Activated CD8-positive, alpha-beta T cell treated with anti-CD3 and anti-CD28 coated beads for 36 hours (primary cell): ENCODE measurements at regions of chr10 and their contacts with region 1.

Region 1: GRCh38 chr10:120221873-120222485 is 235.0 kb upstream of the PLPP4 start:
- DNase-seq: peak; percentile 24
- ATAC-seq: no peak
- H3K4me3 Mint-ChIP-seq: no peak overlapping the region
- H3K27ac Mint-ChIP-seq: no peak overlapping the region
- H3K4me1 Mint-ChIP-seq: no peaks in the 10 kb centered on the region
- H3K27me3 Mint-ChIP-seq: peaks cover 4% of the 10 kb centered on the region
- CTCF ChIP-seq: peak; percentile 43

Region 2: GRCh38 chr10:120209124-120209762 is 12.7 kb before region 1 on chr10:
- CTCF ChIA-PET with region 1: interaction called, 11 read pairs
- POLR2A ChIA-PET with region 1: no interaction called
- intact Hi-C with region 1: no loop called
- DNase-seq: no peak
- ATAC-seq: no peak
- H3K4me3 Mint-ChIP-seq: no peak overlapping the region
- H3K27ac Mint-ChIP-seq: no peak overlapping the region
- H3K4me1 Mint-ChIP-seq: no peaks in the 10 kb centered on the region
- H3K27me3 Mint-ChIP-seq: peaks cover 2% of the 10 kb centered on the region
- CTCF ChIP-seq: no peak

Region 3: DNA sequence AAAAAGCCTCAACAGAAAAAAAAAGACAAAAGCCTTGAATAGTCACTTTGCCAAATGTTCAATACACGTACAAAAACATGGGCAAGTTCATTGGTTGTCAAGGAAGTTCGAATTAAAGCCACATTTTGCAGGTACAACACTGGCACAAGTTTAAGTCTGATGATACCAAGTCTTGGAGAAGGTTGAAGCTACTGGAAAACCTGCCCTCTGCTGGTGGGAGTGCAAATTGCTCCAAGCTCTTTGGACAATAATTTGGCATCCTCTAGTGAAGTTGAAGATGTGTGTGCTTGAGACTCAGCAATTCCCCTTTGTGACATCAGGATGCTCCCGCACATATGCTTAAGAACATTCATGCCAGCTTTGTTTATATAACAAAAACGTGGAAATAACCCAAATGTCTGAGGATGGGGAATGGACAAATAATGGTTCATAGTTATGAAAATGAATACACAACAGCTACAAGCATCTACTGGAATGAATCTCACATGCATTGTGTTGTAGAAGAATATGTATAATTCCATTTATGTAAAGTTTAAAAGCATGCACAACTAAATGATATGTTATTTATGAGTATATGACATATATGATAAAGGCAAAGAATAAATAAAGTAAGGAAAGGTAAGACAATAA is 115.0 kb after region 1 on chr10:
- CTCF ChIA-PET with region 1: interaction called, 21 read pairs
- POLR2A ChIA-PET with region 1: no interaction called
- intact Hi-C with region 1: loop called (anchors 10 kb)
- DNase-seq: peak; percentile 72
- ATAC-seq: no peak
- H3K4me3 Mint-ChIP-seq: no peak overlapping the region
- H3K27ac Mint-ChIP-seq: no peak overlapping the region
- H3K4me1 Mint-ChIP-seq: no peaks in the 10 kb centered on the region
- H3K27me3 Mint-ChIP-seq: peaks cover 4% of the 10 kb centered on the region
- CTCF ChIP-seq: peak; percentile 78